CD8-positive, alpha-beta T cell (primary cell): ENCODE measurements at regions of chr6 and their contacts with region 1.

Region 1: DNA sequence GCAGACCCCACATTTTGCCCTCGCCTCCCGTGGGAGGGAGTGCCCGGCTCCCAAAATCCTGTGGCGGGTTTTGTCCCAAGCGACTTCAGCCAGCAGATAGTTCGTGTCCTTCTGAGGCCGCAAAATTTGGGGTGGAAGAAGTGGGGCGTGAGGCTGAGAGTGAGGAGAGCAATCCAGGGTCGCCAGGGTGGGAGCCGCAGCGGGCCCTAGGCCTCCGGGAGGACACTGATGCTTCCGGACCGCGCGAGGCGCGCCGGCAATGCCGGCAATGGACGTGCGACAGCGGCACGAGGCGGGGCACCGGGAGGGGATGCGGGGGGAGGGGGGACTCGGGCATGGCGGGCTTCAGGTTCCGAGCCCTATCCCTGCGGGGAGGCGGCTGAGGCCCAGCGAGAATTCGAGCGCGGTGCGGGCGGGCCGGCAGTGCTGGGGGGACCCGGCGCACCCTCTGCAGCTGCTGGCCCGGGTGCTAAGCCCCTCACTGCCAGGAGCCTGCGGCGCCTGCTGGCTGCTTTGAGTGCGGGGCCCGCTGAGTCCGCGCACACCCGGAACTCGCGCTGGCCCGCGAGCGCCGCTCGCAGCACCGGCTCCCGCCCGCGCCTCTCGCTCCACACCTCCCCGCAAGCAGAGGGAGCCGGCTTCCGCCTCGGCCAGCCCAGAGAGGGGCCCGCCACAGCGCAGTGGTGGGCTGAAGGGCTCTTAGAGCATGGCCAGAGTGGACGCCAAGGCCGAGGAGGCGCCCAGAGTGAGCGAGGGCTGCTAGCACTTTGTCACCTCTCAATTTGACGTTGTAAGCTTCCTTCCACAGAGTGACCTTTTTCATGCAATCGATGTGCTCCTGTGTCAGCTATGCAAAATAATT is 143.8 kb downstream of the LPA start:
- DNase-seq: peak; percentile 53 to 88 (median 78)
- ATAC-seq: peak; percentile 81
- H3K4me3 ChIP-seq: peak overlapping the region; percentile 69 to 94
- H3K4me3 Mint-ChIP-seq: peak overlapping the region; percentile 96
- H3K27ac ChIP-seq: peak overlapping the region; percentile 67 to 75
- H3K27ac Mint-ChIP-seq: peak overlapping the region; percentile 94
- H3K4me1 ChIP-seq: peaks cover 12% of the 10 kb centered on the region
- H3K4me1 Mint-ChIP-seq: peaks cover 26% of the 10 kb centered on the region
- H3K27me3 ChIP-seq: no peaks in the 10 kb centered on the region
- H3K27me3 Mint-ChIP-seq: peaks cover 2% of the 10 kb centered on the region
- CTCF ChIP-seq: peak; percentile 95

Region 2: GRCh38 chr6:160408528-160408927 is 111.7 kb before region 1 on chr6:
- CTCF ChIA-PET with region 1: no interaction called
- POLR2A ChIA-PET with region 1: no interaction called
- intact Hi-C with region 1: no loop called
- DNase-seq: no peak
- ATAC-seq: no peak
- H3K4me3 ChIP-seq: no peak overlapping the region
- H3K4me3 Mint-ChIP-seq: no peak overlapping the region
- H3K27ac ChIP-seq: no peak overlapping the region
- H3K27ac Mint-ChIP-seq: no peak overlapping the region
- H3K4me1 ChIP-seq: no peaks in the 10 kb centered on the region
- H3K4me1 Mint-ChIP-seq: no peaks in the 10 kb centered on the region
- H3K27me3 ChIP-seq: no peaks in the 10 kb centered on the region
- H3K27me3 Mint-ChIP-seq: peaks cover 13% of the 10 kb centered on the region
- CTCF ChIP-seq: no peak

Region 3: DNA sequence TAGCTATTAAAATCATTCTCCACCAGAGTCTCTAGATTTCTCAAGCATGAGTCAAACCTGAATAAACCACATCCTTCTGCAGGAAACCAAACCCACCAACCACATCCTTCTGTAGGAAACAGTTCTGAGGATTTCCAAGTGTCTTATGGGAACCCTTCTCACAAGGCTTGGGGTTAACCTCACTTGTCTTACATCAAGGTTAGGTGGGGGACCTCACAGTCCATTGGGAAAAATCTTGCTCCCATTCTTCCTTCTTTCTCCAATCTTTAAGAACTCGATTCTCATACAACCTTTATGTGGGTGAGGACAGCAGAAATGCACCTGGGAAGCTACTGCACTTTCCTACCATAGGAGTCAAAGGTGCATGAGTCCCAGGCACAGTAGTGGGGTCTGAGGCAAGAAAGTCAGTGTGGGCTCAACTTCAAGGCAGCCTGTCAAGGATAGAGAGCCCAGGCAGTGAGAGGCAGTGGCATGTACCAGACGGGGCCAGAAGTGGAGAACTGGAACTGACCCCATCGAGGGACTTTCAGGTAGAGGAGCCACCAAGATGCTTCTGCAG is 57.6 kb before region 1 on chr6:
- CTCF ChIA-PET with region 1: interaction called, 22 read pairs
- POLR2A ChIA-PET with region 1: interaction called, 3 read pairs
- intact Hi-C with region 1: loop called (anchors 1 to 5 kb)
- DNase-seq: peak in 8 of 9 experiments; percentile 35 to 92 (median 61)
- ATAC-seq: peak; percentile 89
- H3K4me3 ChIP-seq: peak overlapping the region; percentile 2 to 34
- H3K4me3 Mint-ChIP-seq: peak overlapping the region; percentile 32
- H3K27ac ChIP-seq: peak overlapping the region in 1 of 2 experiments; percentile 43
- H3K27ac Mint-ChIP-seq: peak overlapping the region; percentile 57
- H3K4me1 ChIP-seq: peaks cover 46% of the 10 kb centered on the region
- H3K4me1 Mint-ChIP-seq: peaks cover 82% of the 10 kb centered on the region
- H3K27me3 ChIP-seq: no peaks in the 10 kb centered on the region
- H3K27me3 Mint-ChIP-seq: peaks cover 42% of the 10 kb centered on the region
- CTCF ChIP-seq: no peak

Region 4: DNA sequence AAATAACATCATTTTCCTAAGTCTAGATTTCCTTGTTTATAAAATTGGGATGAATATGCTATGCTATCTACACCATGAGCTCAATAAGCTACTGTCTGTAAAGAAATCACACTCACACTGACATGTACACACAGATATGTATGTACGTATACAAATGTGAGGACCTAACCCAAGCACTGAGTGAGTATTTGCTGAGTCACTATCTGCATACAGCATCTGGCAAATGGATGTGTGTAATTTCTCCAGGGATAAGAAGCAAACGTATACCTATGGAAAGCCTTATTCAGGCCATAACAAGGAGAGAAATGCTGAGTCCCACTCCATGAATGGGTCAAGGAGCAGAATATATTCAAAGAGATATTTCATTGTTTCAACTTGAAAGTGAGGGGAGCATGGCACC is 10.1 kb before region 1 on chr6:
- CTCF ChIA-PET with region 1: interaction called, 17 read pairs
- POLR2A ChIA-PET with region 1: interaction called, 3 read pairs
- intact Hi-C with region 1: no loop called
- DNase-seq: no peak
- ATAC-seq: no peak
- H3K4me3 ChIP-seq: no peak overlapping the region
- H3K4me3 Mint-ChIP-seq: no peak overlapping the region
- H3K27ac ChIP-seq: no peak overlapping the region
- H3K27ac Mint-ChIP-seq: no peak overlapping the region
- H3K4me1 ChIP-seq: no peaks in the 10 kb centered on the region
- H3K4me1 Mint-ChIP-seq: no peaks in the 10 kb centered on the region
- H3K27me3 ChIP-seq: no peaks in the 10 kb centered on the region
- H3K27me3 Mint-ChIP-seq: peaks cover 22% of the 10 kb centered on the region
- CTCF ChIP-seq: no peak

Region 5: GRCh38 chr6:160534050-160534696 is 13.9 kb after region 1 on chr6:
- CTCF ChIA-PET with region 1: interaction called, 173 read pairs
- POLR2A ChIA-PET with region 1: interaction called, 4 read pairs
- intact Hi-C with region 1: loop called (anchors 1 kb)
- DNase-seq: peak; percentile 21 to 76 (median 62)
- ATAC-seq: peak; percentile 86
- H3K4me3 ChIP-seq: no peak overlapping the region
- H3K4me3 Mint-ChIP-seq: no peak overlapping the region
- H3K27ac ChIP-seq: no peak overlapping the region
- H3K27ac Mint-ChIP-seq: no peak overlapping the region
- H3K4me1 ChIP-seq: no peaks in the 10 kb centered on the region
- H3K4me1 Mint-ChIP-seq: no peaks in the 10 kb centered on the region
- H3K27me3 ChIP-seq: no peaks in the 10 kb centered on the region
- H3K27me3 Mint-ChIP-seq: peaks cover 17% of the 10 kb centered on the region
- CTCF ChIP-seq: peak; percentile 95

Region 6: GRCh38 chr6:160766989-160767660 is 246.9 kb after region 1 on chr6:
- CTCF ChIA-PET with region 1: no interaction called
- POLR2A ChIA-PET with region 1: no interaction called
- intact Hi-C with region 1: loop called in 1 of 2 experiments (anchors 2 kb)
- DNase-seq: peak in 7 of 9 experiments; percentile 7 to 50 (median 36)
- ATAC-seq: no peak
- H3K4me3 ChIP-seq: no peak overlapping the region
- H3K4me3 Mint-ChIP-seq: peak overlapping the region; percentile 62
- H3K27ac ChIP-seq: no peak overlapping the region
- H3K27ac Mint-ChIP-seq: no peak overlapping the region
- H3K4me1 ChIP-seq: no peaks in the 10 kb centered on the region
- H3K4me1 Mint-ChIP-seq: peaks cover 6% of the 10 kb centered on the region
- H3K27me3 ChIP-seq: no peaks in the 10 kb centered on the region
- H3K27me3 Mint-ChIP-seq: peaks cover 37% of the 10 kb centered on the region
- CTCF ChIP-seq: peak; percentile 51

Region 7: DNA sequence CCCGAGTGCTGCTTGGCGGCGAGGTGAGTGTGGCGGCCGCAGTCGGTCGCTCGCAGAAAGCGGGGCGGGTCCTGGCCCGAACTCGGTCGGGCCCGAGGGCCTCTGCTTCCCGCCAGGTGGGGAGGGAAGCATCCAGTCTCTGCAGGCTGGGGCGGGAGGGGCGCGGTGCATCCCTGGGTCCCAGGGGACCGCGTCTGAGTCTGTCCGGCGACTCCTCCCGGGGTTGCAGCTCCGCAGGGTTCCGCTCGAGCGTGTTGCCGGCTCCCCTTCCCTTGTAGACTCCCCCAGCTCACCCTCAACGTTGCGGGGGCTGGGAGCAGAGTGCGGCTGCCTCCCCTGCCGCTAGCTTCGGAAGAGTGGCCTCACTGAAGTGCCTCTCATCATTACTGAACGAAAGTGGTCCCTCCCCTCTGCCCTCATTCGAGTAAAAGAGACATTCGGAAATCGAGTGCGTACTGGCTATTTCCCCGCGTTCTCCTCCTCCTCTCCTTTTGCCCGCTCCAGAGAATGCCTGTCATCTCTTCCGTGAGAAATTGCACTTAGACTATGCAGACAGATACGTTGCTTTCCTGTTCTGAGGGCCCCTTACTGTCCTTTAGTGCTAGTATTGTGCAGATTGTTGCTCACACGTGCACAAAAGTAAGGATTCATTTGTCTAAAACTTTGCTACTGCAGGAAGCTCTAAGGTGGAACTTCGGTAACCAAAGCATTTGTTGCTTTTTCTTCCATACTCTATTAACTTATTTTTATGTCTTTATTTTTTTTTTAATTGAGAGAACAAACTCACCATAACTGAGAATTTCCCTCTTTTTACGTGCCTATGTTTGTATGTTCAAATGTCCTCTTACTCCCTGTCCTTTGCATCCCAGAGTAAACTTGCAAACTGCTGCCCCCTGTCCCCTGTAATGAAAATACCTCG is 472.0 kb after region 1 on chr6:
- CTCF ChIA-PET with region 1: no interaction called
- POLR2A ChIA-PET with region 1: no interaction called
- intact Hi-C with region 1: loop called (anchors 5 to 10 kb)
- DNase-seq: peak in 8 of 9 experiments; percentile 11 to 75 (median 38)
- ATAC-seq: peak; percentile 64
- H3K4me3 ChIP-seq: peak overlapping the region; percentile 85 to 94
- H3K4me3 Mint-ChIP-seq: peak overlapping the region; percentile 96
- H3K27ac ChIP-seq: peak overlapping the region; percentile 78 to 82
- H3K27ac Mint-ChIP-seq: peak overlapping the region; percentile 90
- H3K4me1 ChIP-seq: peaks cover 32% of the 10 kb centered on the region
- H3K4me1 Mint-ChIP-seq: peaks cover 47% of the 10 kb centered on the region
- H3K27me3 ChIP-seq: no peaks in the 10 kb centered on the region
- H3K27me3 Mint-ChIP-seq: no peaks in the 10 kb centered on the region
- CTCF ChIP-seq: peak; percentile 49

Region 8: GRCh38 chr6:161273752-161274487 is 753.6 kb after region 1 on chr6 and contains the start of gene AGPAT4:
- CTCF ChIA-PET with region 1: no interaction called
- POLR2A ChIA-PET with region 1: no interaction called
- intact Hi-C with region 1: loop called in 1 of 2 experiments (anchors 10 kb)
- DNase-seq: peak; percentile 39 to 95 (median 63)
- ATAC-seq: peak; percentile 94
- H3K4me3 ChIP-seq: peak within 1 kb of the TSS; percentile 61 to 72
- H3K4me3 Mint-ChIP-seq: peak within 1 kb of the TSS; percentile 90
- H3K27ac ChIP-seq: peak within 1 kb of the TSS; percentile 61 to 85
- H3K27ac Mint-ChIP-seq: peak within 1 kb of the TSS; percentile 91
- H3K4me1 ChIP-seq: peaks cover 14% of the 10 kb centered on the region
- H3K4me1 Mint-ChIP-seq: peaks cover 21% of the 10 kb centered on the region
- H3K27me3 ChIP-seq: no peaks in the 10 kb centered on the region
- H3K27me3 Mint-ChIP-seq: no peaks in the 10 kb centered on the region
- CTCF ChIP-seq: no peak
- total RNA-seq, gene AGPAT4: 1.2 to 2.8 TPM

Region 9: GRCh38 chr6:162068340-162068739 is 1548.1 kb after region 1 on chr6:
- CTCF ChIA-PET with region 1: no interaction called
- POLR2A ChIA-PET with region 1: no interaction called
- intact Hi-C with region 1: no loop called
- DNase-seq: no peak
- ATAC-seq: no peak
- H3K4me3 ChIP-seq: no peak overlapping the region
- H3K4me3 Mint-ChIP-seq: no peak overlapping the region
- H3K27ac ChIP-seq: no peak overlapping the region
- H3K27ac Mint-ChIP-seq: no peak overlapping the region
- H3K4me1 ChIP-seq: no peaks in the 10 kb centered on the region
- H3K4me1 Mint-ChIP-seq: no peaks in the 10 kb centered on the region
- H3K27me3 ChIP-seq: no peaks in the 10 kb centered on the region
- H3K27me3 Mint-ChIP-seq: no peaks in the 10 kb centered on the region
- CTCF ChIP-seq: no peak